Caco-2 (cell line): ENCODE measurements at regions of chr13 and their contacts with region 1.

Region 1: DNA sequence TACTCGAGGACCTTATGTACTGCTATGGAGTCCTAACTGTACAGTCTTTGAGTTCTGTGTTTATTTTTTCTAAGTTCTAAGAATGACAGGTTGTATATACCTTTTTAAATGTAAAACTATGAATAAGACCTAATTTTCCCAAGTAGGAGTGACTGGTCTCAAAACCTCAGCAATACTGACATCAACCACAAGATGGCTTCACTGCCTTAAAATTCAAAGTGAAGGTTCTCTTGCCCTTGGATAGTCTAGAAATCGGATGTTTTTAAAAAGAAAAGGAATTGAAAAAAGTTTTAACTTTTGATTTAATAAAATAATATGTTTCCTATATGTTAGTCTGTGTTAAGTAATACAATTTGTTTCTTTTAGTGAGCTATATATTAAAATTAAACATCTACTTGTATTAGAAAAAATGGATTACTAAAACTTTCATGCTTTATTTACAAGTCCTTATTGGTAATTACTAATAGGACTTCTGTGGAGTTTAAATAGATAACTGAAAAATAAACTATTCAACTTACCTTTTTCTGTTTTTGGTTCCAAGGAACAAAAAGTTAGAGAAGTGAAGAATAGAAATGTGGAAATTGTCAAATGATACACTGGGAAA is 52.0 kb downstream of the TDRD3 start:
- DNase-seq: peak in 1 of 2 experiments; percentile 49
- H3K4me3 ChIP-seq: no peak overlapping the region
- H3K4me3 Mint-ChIP-seq: no peak overlapping the region
- H3K27ac Mint-ChIP-seq: no peak overlapping the region
- H3K4me1 ChIP-seq: no peaks in the 10 kb centered on the region
- H3K4me1 Mint-ChIP-seq: no peaks in the 10 kb centered on the region
- H3K27me3 ChIP-seq: no peaks in the 10 kb centered on the region
- H3K27me3 Mint-ChIP-seq: no peaks in the 10 kb centered on the region
- CTCF ChIP-seq: peak; percentile 72 to 82

Region 2: DNA sequence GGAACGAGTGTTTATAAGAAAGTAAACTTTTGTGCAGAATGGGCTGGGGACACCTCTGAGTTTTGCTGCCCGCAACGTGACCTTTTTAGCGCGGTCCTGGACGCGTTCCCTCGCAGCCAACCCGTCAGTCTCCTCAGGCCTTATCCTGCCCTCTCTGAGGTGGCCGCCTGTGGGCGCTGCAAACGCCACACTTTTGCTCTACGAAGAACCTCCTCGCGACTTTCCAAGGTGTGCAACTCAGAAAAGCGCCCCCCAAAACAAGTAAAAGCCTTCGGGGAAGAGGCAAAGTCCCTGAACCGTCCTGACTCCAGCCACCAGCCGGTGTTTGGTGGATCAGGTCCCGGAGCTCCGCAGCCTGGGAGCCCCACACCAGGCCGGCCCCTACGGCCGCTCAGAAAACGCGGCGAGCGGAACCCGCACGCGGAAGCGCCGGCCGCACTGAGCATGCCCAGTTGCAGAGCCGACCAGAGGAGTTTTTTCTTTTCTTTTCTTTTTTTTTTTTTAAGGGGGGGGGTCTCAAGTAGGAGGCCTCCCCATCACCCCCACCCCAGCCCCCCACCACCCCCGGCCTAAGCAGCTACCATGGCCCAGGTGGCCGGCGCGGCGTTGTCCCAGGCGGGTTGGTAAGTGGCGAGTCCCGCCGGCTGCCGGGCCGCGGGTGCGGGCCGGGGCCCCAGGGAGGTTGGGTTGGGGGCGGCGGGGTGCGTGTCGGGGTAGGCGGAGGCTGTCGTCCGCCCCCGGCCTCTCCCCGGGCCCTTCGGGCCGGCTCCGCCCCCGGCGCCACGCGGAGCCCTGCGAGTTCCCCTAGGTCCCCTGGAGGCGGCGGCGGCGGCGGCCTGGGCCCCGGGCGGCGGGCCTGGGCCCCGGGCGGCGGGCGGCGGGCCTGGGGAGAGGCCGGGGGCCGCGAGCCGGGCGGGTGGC is 52.0 kb before region 1 on chr13 and contains the start of gene TDRD3:
- CTCF ChIA-PET with region 1: no interaction called
- POLR2A ChIA-PET with region 1: no interaction called
- intact Hi-C with region 1: no loop called
- DNase-seq: peak; percentile 90 to 91
- H3K4me3 ChIP-seq: peak within 1 kb of the TSS; percentile 58
- H3K4me3 Mint-ChIP-seq: peak within 1 kb of the TSS; percentile 91
- H3K27ac Mint-ChIP-seq: peak within 1 kb of the TSS; percentile 85
- H3K4me1 ChIP-seq: peaks cover 25% of the 10 kb centered on the region
- H3K4me1 Mint-ChIP-seq: peaks cover 43% of the 10 kb centered on the region
- H3K27me3 ChIP-seq: no peaks in the 10 kb centered on the region
- H3K27me3 Mint-ChIP-seq: no peaks in the 10 kb centered on the region
- CTCF ChIP-seq: peak; percentile 83 to 94
- total RNA-seq, gene TDRD3: 16.3 and 17.2 TPM in 2 replicates

Region 3: DNA sequence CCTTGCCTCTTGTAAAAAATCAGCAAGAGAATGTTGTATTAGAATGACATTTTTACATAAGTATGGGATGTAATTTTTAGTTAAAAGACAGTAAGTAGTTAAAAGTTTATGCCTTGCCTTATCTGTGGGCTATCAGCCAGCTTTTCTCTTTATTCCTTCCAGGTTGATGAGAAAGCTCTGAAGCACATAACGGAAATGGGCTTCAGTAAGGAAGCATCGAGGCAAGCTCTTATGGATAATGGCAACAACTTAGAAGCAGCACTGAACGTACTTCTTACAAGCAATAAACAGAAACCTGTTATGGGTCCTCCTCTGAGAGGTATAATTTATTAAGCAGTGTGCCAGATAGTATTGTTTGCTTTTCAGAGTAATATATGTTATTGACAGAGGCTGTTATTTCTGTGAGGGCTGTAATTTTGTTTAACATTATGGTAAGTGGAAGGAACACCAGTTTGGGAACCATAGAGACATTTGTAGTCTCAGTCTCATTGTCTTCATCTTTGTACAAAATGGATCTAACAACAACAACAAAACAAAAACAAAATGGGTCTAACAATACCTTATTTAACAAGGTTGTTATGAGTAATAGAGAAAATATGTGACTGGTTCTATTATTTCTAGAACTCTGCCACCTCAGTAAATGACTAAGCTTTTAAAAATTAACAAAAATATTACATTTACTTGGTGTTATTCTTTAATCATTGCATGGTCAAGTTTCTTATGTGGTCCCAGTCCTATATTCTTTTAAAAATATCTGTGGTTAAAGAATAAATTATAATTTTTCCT is 60.8 kb after region 1 on chr13:
- CTCF ChIA-PET with region 1: no interaction called
- POLR2A ChIA-PET with region 1: no interaction called
- intact Hi-C with region 1: no loop called
- DNase-seq: no peak
- H3K4me3 ChIP-seq: no peak overlapping the region
- H3K4me3 Mint-ChIP-seq: no peak overlapping the region
- H3K27ac Mint-ChIP-seq: no peak overlapping the region
- H3K4me1 ChIP-seq: no peaks in the 10 kb centered on the region
- H3K4me1 Mint-ChIP-seq: no peaks in the 10 kb centered on the region
- H3K27me3 ChIP-seq: no peaks in the 10 kb centered on the region
- H3K27me3 Mint-ChIP-seq: no peaks in the 10 kb centered on the region
- CTCF ChIP-seq: no peak

Region 4: DNA sequence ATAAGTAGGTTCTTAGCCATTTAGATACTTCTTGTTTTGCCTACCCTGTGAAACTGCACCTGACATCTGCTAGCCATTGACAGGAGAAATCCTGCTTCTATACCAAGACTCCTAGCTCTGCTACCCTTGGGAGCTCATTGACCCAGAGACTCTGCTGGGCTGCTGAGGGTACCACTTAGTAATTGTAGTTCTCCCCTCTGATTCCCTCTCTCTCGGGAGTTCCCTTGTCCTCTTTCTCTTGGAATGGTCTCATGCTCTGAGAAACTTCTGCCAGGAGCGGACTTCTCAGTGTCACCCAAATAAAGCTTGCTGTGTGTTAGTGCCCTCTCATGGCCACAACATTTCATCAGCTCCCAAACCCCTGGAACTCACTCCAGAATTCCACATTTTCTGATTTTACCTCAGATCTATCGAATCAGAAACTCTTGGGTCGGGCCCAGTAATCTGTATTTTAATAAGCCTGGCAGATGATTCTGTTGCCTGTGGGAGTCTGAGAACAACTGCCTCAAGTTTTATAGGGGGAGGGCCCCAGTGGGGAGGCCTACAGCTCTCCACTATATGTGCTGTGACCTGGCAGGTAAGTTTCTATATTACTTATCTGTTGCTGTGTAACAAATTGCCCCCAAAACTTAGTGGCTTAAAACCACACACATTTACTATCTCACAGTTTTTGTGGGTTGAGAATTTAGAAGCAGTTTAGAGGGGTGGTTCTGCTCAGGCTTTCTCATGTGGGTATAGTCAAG is 169.2 kb after region 1 on chr13:
- CTCF ChIA-PET with region 1: interaction called, 4 read pairs
- POLR2A ChIA-PET with region 1: no interaction called
- intact Hi-C with region 1: loop called (anchors 1 kb)
- DNase-seq: peak in 1 of 2 experiments; percentile 39
- H3K4me3 ChIP-seq: no peak overlapping the region
- H3K4me3 Mint-ChIP-seq: no peak overlapping the region
- H3K27ac Mint-ChIP-seq: no peak overlapping the region
- H3K4me1 ChIP-seq: no peaks in the 10 kb centered on the region
- H3K4me1 Mint-ChIP-seq: no peaks in the 10 kb centered on the region
- H3K27me3 ChIP-seq: peaks cover 2% of the 10 kb centered on the region; the same call in 1 of the 2 replicates
- H3K27me3 Mint-ChIP-seq: peaks cover 38% of the 10 kb centered on the region
- CTCF ChIP-seq: peak; percentile 54 to 71